SK-N-SH (cell line): ENCODE measurements at regions of chr2 and their contacts with region 1.

Region 1: GRCh38 chr2:9813312-9814133 is 29.8 kb upstream of the TAF1B start:
- DNase-seq: peak; percentile 96
- H3K4me3 ChIP-seq: peak overlapping the region in 1 of 2 experiments; percentile 4; a peak in 1 of 4 replicates
- H3K27ac ChIP-seq: no peak overlapping the region
- H3K4me1 ChIP-seq: peaks cover 0 to 10% of the 10 kb centered on the region in 2 experiments; a peak in 1 of 4 replicates
- H3K27me3 ChIP-seq: no peaks in the 10 kb centered on the region
- CTCF ChIP-seq: peak; percentile 98
- EP300 ChIP-seq: no peak
- RAD21 ChIP-seq: peak; percentile 91

Region 2: DNA sequence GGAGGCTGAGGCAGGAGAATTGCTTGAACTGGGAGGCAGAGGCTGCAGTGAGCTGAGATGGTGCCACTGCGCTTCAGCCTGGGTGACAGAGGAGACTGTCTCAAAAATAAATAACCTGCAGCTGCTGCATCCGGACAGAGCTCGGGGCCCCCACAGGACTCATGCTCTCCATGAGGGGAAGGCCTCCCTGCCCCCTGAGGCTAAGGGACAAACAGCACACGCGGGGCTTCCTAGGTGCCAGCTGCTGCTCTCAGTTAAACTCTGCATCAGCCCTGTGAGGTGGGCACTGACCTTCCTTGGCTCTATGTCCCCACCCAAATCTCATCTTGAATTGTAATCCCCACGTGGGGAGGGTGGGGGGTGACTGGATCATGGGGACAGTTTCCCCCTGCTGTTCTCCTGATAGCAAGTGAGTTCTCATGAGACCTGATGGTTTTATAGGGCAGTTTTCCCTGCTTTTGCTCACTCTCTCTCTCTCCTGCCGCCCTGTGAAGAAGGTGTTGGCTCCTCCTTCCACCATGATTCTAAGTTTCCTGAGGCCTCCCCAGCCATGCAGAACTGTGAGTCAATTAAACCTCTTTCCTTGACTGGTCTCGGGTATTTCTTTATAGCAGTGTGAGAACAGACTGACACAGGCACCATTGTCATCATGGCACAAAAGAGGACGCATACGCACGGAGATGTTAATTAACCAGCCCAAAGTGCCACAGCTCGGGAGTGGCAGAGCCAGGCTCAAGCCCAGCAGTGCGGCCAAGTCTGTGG is 20.2 kb before region 1 on chr2:
- CTCF ChIA-PET with region 1: interaction called, 207 read pairs
- POLR2A ChIA-PET with region 1: no interaction called
- DNase-seq: no peak
- H3K4me3 ChIP-seq: no peak overlapping the region
- H3K27ac ChIP-seq: no peak overlapping the region
- H3K4me1 ChIP-seq: peaks cover 0 to 7% of the 10 kb centered on the region in 2 experiments; a peak in 1 of 4 replicates
- H3K27me3 ChIP-seq: no peaks in the 10 kb centered on the region
- CTCF ChIP-seq: no peak
- EP300 ChIP-seq: no peak
- RAD21 ChIP-seq: no peak

Region 3: GRCh38 chr2:9836524-9836923 is 23.0 kb after region 1 on chr2:
- CTCF ChIA-PET with region 1: interaction called, 83 read pairs
- POLR2A ChIA-PET with region 1: no interaction called
- DNase-seq: no peak
- H3K4me3 ChIP-seq: no peak overlapping the region
- H3K27ac ChIP-seq: no peak overlapping the region
- H3K4me1 ChIP-seq: no peaks in the 10 kb centered on the region
- H3K27me3 ChIP-seq: no peaks in the 10 kb centered on the region; the same call in 1 of the 2 replicates
- CTCF ChIP-seq: no peak
- EP300 ChIP-seq: no peak
- RAD21 ChIP-seq: no peak

Region 4: GRCh38 chr2:9961013-9961412 is 147.5 kb after region 1 on chr2:
- CTCF ChIA-PET with region 1: interaction called, 16 read pairs
- POLR2A ChIA-PET with region 1: no interaction called
- DNase-seq: peak; percentile 88
- H3K4me3 ChIP-seq: no peak overlapping the region
- H3K27ac ChIP-seq: no peak overlapping the region; a peak in 1 of 4 replicates
- H3K4me1 ChIP-seq: peaks cover 0 to 9% of the 10 kb centered on the region in 2 experiments; a peak in 2 of 4 replicates
- H3K27me3 ChIP-seq: no peaks in the 10 kb centered on the region
- CTCF ChIP-seq: no peak
- EP300 ChIP-seq: no peak
- RAD21 ChIP-seq: no peak

Region 5: GRCh38 chr2:9990735-9991134 is 177.2 kb after region 1 on chr2:
- CTCF ChIA-PET with region 1: interaction called, 94 read pairs
- POLR2A ChIA-PET with region 1: no interaction called
- DNase-seq: no peak
- H3K4me3 ChIP-seq: no peak overlapping the region
- H3K27ac ChIP-seq: no peak overlapping the region
- H3K4me1 ChIP-seq: peaks cover 13 to 27% of the 10 kb centered on the region in 2 experiments; a peak in 2 of 4 replicates
- H3K27me3 ChIP-seq: no peaks in the 10 kb centered on the region
- CTCF ChIP-seq: no peak
- EP300 ChIP-seq: no peak
- RAD21 ChIP-seq: no peak

Region 6: DNA sequence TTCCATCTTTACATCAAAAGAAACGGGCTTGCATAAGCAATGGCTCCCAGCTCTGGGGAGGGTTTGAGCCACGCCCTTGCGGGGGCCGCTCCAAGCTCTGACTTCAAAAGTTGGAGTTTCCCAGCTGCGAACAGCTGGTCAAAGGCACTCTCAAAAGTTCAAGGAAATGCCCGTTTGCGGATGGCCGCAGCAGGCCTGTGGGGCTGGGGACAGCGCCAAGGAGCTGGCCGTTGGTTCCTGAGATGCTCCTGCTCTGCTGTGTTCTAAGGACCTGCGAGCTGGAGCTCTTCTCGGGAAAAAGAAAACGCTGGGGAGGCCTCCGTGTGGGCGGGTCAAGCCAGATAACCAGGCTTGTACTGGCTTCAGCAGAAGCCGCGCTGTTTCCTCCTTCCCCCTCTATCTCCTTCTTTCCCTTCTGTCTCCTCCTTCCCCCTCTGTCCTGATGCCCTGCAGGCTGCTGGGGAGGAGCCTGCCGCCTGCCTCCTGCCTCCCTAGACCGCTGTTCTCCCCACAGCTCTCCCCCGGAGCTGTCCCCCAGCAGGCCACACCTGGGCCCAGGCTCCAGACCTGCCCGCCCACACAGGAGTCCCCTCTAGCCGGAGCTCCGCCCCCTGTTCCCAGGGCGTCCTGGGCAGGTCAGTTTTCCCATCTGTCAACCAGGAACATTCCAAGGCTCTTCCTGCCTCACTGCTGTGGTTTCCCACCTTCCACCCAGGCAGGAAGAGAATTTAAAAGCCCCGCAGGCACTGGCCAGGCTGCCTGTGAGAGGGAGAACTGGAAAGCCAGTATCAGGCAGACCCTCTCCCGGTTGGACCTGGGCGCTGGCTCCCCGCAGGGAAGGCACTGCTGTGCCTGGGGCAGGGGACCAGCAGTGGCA is 243.9 kb after region 1 on chr2:
- CTCF ChIA-PET with region 1: interaction called, 257 read pairs
- POLR2A ChIA-PET with region 1: no interaction called
- DNase-seq: peak; percentile 58
- H3K4me3 ChIP-seq: no peak overlapping the region
- H3K27ac ChIP-seq: no peak overlapping the region
- H3K4me1 ChIP-seq: peaks cover 0 to 23% of the 10 kb centered on the region in 2 experiments; a peak in 1 of 4 replicates
- H3K27me3 ChIP-seq: no peaks in the 10 kb centered on the region
- CTCF ChIP-seq: no peak
- EP300 ChIP-seq: no peak
- RAD21 ChIP-seq: no peak

Region 7: DNA sequence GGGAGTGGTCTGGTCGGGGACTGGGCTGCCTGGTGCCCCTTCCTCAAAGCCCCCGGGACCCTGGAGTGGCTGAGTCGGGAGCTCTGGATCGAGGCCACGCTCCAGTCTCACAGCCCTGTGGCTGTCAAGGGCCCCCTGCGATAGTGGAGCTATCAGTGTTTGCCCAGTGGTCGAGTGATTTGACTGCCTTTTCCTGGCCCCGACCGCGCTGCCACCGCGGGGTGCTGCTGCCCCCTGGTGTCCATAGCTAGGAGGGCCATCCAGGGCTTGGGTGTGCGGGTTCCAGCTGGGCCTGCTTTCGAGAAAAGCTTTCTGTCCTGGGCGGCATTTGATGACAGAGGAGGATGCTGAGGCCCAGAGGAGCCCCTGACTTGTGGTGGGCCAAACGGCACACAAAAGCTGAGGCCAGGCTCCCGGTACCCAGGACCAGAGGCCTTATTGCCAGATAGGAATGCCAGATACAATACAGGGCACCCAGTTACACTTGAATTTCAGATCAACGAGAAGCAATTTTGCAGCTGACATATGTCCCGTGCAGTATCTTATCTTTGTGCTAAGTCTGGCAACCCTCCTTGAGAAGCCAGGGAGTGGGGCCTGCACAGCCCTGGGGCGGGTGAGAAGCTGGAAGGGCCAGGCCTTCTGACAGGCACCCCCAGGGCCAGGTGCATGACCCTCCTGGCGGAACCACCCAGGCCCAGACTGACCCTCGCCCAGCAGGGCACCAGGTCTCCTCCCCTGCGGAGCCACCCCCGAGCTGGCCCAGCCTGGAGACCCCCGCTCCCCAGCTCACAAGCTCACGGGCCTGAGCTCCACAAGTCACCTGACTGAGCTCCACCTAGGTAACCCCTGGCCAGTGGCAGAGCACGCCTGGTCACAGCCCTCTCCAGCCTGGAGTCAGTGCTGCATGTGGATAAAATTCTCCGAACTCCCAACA is 621.6 kb after region 1 on chr2:
- CTCF ChIA-PET with region 1: interaction called, 17 read pairs
- POLR2A ChIA-PET with region 1: no interaction called
- DNase-seq: peak; percentile 99
- H3K4me3 ChIP-seq: no peak overlapping the region; a peak in 1 of 4 replicates
- H3K27ac ChIP-seq: no peak overlapping the region
- H3K4me1 ChIP-seq: peaks cover 0 to 4% of the 10 kb centered on the region in 2 experiments; a peak in 1 of 4 replicates
- H3K27me3 ChIP-seq: no peaks in the 10 kb centered on the region
- CTCF ChIP-seq: peak; percentile 98
- EP300 ChIP-seq: no peak
- RAD21 ChIP-seq: peak; percentile 100